ENCODE measurements at regions of chr1 and their contacts with region 1.

Region 1: GRCh38 chr1:43934101-43934985 is 742 bp downstream of the ARTN start:
- DNase-seq: peak; percentile 71
- H3K4me3 ChIP-seq: peak overlapping the region; percentile 69 to 74 (median 70)
- H3K27ac ChIP-seq: peak overlapping the region; percentile 81
- H3K4me1 ChIP-seq: peaks cover 73% of the 10 kb centered on the region
- H3K27me3 ChIP-seq: no peaks in the 10 kb centered on the region
- CTCF ChIP-seq: peak; percentile 89 to 95

Region 2: GRCh38 chr1:43668956-43669355 is 265.4 kb before region 1 on chr1:
- CTCF ChIA-PET with region 1: no interaction called
- dilution Hi-C with region 1: no loop called
- in situ Hi-C with region 1: loop called in 1 of 2 experiments (anchors 25 kb)
- intact Hi-C with region 1: loop called (anchors 5 kb)
- DNase-seq: peak; percentile 65
- H3K4me3 ChIP-seq: no peak overlapping the region
- H3K27ac ChIP-seq: peak overlapping the region; percentile 21
- H3K4me1 ChIP-seq: peaks cover 45% of the 10 kb centered on the region
- H3K27me3 ChIP-seq: no peaks in the 10 kb centered on the region
- CTCF ChIP-seq: no peak

Region 3: GRCh38 chr1:43774359-43774758 is 160.0 kb before region 1 on chr1:
- CTCF ChIA-PET with region 1: no interaction called
- dilution Hi-C with region 1: loop called (anchors 5 kb)
- in situ Hi-C with region 1: loop called in 1 of 2 experiments (anchors 5 kb)
- intact Hi-C with region 1: no loop called
- DNase-seq: peak; percentile 79
- H3K4me3 ChIP-seq: no peak overlapping the region
- H3K27ac ChIP-seq: peak overlapping the region; percentile 54
- H3K4me1 ChIP-seq: peaks cover 30% of the 10 kb centered on the region
- H3K27me3 ChIP-seq: no peaks in the 10 kb centered on the region
- CTCF ChIP-seq: no peak

Region 4: DNA sequence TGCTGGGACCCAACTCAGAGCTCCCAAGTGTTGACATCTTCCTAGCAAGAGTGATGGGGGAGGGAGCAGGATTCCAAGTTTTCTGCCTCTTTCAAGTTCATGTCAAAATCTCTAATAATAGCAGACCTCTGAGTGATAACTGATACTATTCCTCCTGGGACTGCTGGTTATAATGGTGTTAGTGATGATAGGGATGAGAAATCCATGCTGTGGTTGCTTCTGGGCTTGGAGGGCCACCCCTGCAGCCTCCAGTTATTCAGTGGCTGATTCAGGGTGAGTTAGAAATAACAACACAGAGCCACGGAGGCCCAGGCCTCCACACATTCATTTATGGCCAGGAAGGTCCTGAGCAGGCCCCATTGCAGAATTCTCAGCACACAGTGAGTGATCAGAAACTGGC is 41.3 kb before region 1 on chr1:
- CTCF ChIA-PET with region 1: no interaction called
- dilution Hi-C with region 1: no loop called
- in situ Hi-C with region 1: no loop called
- intact Hi-C with region 1: no loop called
- DNase-seq: no peak
- H3K4me3 ChIP-seq: no peak overlapping the region
- H3K27ac ChIP-seq: no peak overlapping the region
- H3K4me1 ChIP-seq: peaks cover 3% of the 10 kb centered on the region
- H3K27me3 ChIP-seq: no peaks in the 10 kb centered on the region
- CTCF ChIP-seq: no peak

Region 5: GRCh38 chr1:43912607-43913006 is 21.7 kb before region 1 on chr1:
- CTCF ChIA-PET with region 1: interaction called, 18 read pairs
- dilution Hi-C with region 1: no loop called
- in situ Hi-C with region 1: no loop called
- intact Hi-C with region 1: loop called (anchors 1 kb)
- DNase-seq: peak; percentile 83
- H3K4me3 ChIP-seq: peak overlapping the region in 1 of 3 experiments; percentile 9
- H3K27ac ChIP-seq: peak overlapping the region; percentile 75
- H3K4me1 ChIP-seq: peaks cover 41% of the 10 kb centered on the region
- H3K27me3 ChIP-seq: no peaks in the 10 kb centered on the region
- CTCF ChIP-seq: no peak

Region 6: DNA sequence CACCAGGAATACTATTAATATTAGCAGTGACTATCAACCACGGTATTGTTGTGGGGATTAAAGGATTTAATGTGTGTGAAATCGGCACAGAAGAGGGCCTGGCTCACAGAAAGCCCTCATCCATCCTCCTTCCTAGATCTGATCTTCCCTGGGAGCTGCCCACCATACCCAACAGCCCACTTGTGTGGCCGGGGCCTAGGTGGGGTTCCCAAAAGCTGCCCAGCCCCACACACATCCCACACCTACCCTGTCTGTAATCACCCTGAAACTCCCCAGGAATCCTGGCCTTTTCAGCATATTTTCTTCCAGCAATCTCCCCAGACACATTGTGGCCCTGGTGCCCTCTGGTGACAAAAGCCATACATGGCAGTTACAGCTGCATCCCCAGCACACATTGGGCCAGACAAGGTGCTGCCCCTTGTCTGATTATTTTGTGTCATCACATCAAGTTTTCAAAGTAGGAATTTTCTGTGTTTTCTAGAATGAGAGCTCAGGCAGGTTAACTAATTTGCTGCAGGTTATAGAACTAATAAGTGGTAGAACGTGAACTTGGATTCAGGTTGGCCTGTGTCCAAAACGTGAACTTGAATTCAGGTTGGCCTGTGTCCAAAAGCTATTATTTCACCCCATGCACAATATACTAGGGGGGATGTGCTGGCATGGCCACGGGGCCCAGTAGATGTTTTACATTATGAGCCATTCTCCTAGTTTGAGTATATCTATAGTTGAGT is 102.2 kb after region 1 on chr1:
- CTCF ChIA-PET with region 1: no interaction called
- dilution Hi-C with region 1: no loop called
- in situ Hi-C with region 1: loop called in 1 of 2 experiments (anchors 10 kb)
- intact Hi-C with region 1: loop called (anchors 2 kb)
- DNase-seq: peak; percentile 62
- H3K4me3 ChIP-seq: no peak overlapping the region
- H3K27ac ChIP-seq: no peak overlapping the region
- H3K4me1 ChIP-seq: peaks cover 26% of the 10 kb centered on the region
- H3K27me3 ChIP-seq: no peaks in the 10 kb centered on the region
- CTCF ChIP-seq: peak; percentile 88 to 95

Measured in mammary epithelial cell (primary cell).